MCF 10A (cell line): ENCODE measurements at regions of chr3 and their contacts with region 1.

Region 1: DNA sequence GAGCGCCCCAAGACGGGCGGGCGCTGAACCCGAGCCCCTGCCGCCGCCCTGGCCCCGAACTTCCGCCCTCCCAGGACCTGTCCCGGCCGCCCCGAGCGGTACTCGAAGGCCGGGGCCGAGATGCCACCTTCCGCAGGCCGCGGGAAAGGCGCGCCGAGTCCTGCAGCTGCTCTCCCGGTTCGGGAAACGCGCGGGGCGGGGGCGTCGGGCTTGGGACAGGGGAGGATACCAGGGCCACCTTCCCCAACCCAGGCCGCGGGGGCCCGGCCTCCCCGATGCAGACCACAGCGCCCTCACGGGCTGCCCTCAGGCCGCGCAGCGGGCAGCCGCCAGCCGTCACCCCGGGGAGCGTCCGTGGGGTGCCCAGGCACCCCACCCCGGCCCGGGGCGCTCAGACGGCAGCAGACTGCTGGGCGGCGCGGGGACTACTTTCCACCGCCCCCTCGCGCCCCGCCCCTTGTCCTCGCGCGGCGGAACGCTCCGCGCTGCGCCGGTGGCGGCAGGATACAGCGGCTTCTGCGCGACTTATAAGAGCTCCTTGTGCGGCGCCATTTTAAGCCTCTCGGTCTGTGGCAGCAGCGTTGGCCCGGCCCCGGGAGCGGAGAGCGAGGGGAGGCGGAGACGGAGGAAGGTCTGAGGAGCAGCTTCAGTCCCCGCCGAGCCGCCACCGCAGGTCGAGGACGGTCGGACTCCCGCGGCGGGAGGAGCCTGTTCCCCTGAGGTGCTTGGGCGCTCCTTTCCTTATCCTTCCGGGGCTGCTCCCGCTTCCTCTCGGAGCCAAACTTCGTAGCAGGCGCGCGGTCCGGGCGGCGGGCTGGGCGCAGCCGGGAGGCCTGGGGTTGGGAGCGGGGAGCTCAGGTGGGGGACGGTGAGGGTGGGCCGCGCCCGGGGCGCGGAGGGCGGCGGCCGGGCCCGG is at the start of gene CTNNB1:
- DNase-seq: peak; percentile 89
- H3K4me3 Mint-ChIP-seq: peak within 1 kb of the TSS; percentile 82
- H3K27ac Mint-ChIP-seq: peak within 1 kb of the TSS; percentile 74
- H3K4me1 Mint-ChIP-seq: peaks cover 22% of the 10 kb centered on the region
- H3K27me3 Mint-ChIP-seq: no peaks in the 10 kb centered on the region
- CTCF ChIP-seq: no peak
- total RNA-seq, gene CTNNB1: 222 and 244 TPM in 2 replicates

Region 2: DNA sequence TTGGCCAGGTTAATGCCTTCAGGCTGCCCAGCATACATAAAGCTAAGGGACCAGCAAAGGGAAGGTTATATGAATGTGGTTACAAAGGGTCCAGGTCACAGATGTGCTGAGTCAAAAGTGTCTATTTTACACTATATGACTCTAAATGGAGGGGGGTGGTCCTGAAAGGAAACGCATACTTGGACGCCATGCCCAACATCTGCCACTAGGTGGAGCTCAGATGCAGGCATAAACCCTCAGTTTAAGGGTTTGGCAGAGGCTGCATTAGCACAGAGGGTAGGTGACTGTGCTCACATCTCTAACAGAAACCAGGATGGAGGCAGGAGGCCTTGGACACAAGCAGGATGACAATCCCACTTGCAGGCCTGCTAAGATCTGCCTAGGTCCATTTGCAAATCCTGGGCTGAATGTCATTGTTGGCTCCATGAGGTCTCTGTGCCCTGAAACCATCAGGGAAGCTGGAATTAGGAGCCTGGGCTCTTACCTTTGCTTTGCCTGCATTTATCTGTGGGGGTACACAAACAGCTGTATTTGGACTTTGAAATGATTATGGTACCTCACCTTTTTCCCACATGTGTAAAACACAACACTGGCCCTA is 618.6 kb before region 1 on chr3:
- CTCF ChIA-PET with region 1: interaction called, 37 read pairs
- POLR2A ChIA-PET with region 1: interaction called, 3 read pairs
- intact Hi-C with region 1: loop called (anchors 1 kb)
- DNase-seq: peak; percentile 77
- H3K4me3 Mint-ChIP-seq: no peak overlapping the region
- H3K27ac Mint-ChIP-seq: no peak overlapping the region
- H3K4me1 Mint-ChIP-seq: peaks cover 10% of the 10 kb centered on the region
- H3K27me3 Mint-ChIP-seq: peaks cover 10% of the 10 kb centered on the region
- CTCF ChIP-seq: peak; percentile 88

Region 3: GRCh38 chr3:40930131-40930538 is 269.1 kb before region 1 on chr3:
- CTCF ChIA-PET with region 1: no interaction called
- POLR2A ChIA-PET with region 1: no interaction called
- intact Hi-C with region 1: loop called (anchors 5 kb)
- DNase-seq: peak; percentile 61
- H3K4me3 Mint-ChIP-seq: no peak overlapping the region
- H3K27ac Mint-ChIP-seq: peak overlapping the region; percentile 53
- H3K4me1 Mint-ChIP-seq: peaks cover 18% of the 10 kb centered on the region
- H3K27me3 Mint-ChIP-seq: no peaks in the 10 kb centered on the region
- CTCF ChIP-seq: peak; percentile 17

Region 4: GRCh38 chr3:41216422-41216821 is 17.2 kb after region 1 on chr3:
- CTCF ChIA-PET with region 1: interaction called, 10 read pairs
- POLR2A ChIA-PET with region 1: interaction called, 53 read pairs
- intact Hi-C with region 1: no loop called
- DNase-seq: no peak
- H3K4me3 Mint-ChIP-seq: no peak overlapping the region
- H3K27ac Mint-ChIP-seq: no peak overlapping the region
- H3K4me1 Mint-ChIP-seq: peaks cover 43% of the 10 kb centered on the region
- H3K27me3 Mint-ChIP-seq: no peaks in the 10 kb centered on the region
- CTCF ChIP-seq: no peak

Region 5: DNA sequence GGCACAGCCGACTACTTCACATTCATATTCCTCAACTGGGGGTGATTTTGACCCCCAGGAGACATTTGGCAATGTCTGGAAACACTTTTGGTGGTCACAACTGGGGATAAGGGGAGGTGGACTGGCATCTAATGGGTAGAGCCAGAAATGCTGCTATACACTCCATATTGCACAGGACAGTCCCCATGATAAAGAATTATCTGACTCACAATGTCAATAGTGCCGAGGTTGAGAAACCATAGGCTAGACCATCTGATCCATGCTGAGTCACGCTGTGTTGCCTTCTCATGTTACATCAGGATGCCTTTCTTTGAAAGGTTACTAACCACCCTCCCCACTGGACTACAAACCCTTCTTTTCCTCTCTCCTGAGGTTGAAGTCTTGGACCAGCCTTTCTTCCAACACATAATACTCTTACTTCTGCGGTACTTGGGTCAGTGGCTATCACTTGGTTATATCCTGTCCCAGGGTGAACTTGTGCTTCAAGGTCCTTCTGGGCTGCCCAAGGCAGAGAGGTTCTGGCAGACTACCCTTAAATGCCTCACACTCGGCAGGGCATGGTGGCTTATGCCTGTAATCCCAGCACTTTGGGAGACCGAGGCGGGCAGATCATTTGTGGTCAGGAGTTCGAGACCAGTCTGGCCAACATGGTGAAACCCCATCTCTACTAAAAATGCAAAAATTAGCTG is 68.9 kb after region 1 on chr3:
- CTCF ChIA-PET with region 1: no interaction called
- POLR2A ChIA-PET with region 1: no interaction called
- intact Hi-C with region 1: loop called (anchors 5 kb)
- DNase-seq: peak; percentile 98
- H3K4me3 Mint-ChIP-seq: no peak overlapping the region
- H3K27ac Mint-ChIP-seq: peak overlapping the region; percentile 51
- H3K4me1 Mint-ChIP-seq: peaks cover 19% of the 10 kb centered on the region
- H3K27me3 Mint-ChIP-seq: no peaks in the 10 kb centered on the region
- CTCF ChIP-seq: no peak

Region 6: GRCh38 chr3:41881233-41881821 is 682.1 kb after region 1 on chr3:
- CTCF ChIA-PET with region 1: interaction called, 6 read pairs
- POLR2A ChIA-PET with region 1: no interaction called
- intact Hi-C with region 1: loop called (anchors 5 kb)
- DNase-seq: peak; percentile 51
- H3K4me3 Mint-ChIP-seq: no peak overlapping the region
- H3K27ac Mint-ChIP-seq: no peak overlapping the region
- H3K4me1 Mint-ChIP-seq: no peaks in the 10 kb centered on the region
- H3K27me3 Mint-ChIP-seq: no peaks in the 10 kb centered on the region
- CTCF ChIP-seq: peak; percentile 79